Thyroid gland (tissue), 4 donors: ENCODE measurements at regions of chr17 and their contacts with region 1.

Region 1: DNA sequence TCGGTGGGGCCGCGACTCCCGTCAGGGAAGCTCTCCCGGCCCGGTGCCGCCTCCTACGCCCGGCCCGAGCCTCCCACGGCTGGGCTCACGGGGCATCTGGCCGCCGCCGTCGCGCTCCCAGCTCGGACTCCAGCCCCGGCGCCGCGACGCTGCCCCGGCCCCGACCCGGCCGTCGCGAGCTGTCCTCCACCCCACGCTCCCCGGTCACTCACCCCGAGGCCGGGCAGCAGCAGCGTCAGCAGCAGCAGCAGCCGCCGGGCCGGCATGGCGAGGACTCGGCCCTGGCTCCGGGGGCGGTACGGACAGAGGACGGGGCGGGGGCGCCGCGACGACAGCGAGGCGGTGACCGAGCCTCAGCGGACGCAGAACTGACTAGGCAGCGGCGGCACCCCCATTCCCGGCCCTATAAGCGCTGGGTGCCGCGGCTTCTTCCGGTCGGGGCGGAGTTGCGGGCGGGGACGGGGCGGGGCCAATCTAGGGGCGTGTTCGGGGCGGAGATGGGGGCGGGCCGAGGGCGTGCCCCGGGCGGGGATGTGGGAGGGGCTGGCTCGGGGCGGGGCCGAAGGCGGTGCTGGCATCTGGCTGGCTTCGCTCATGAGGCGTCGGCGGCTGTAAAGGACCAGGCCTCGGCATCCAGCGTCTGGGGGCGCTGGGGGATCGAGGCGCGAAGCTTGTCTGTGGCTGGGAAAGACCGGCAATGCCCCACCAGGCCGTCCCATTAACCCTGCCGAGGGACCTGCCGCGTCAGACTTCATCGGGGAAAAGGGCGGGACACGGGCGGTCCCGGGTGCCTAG is at the start of gene ERN1:
- DNase-seq: peak; percentile 93
- H3K4me3 ChIP-seq: peak within 1 kb of the TSS; percentile 63 to 93 (median 77)
- H3K27ac ChIP-seq: peak within 1 kb of the TSS; percentile 88 to 98 (median 90)
- H3K4me1 ChIP-seq: peaks cover 8 to 23% of the 10 kb centered on the region in 2 donors
- H3K27me3 ChIP-seq: no peaks in the 10 kb centered on the region
- CTCF ChIP-seq: no peak
- POLR2A ChIP-seq: peak; percentile 85 to 99
- total RNA-seq, gene ERN1: 9.5 to 20.2 (median 12.8) TPM

Region 2: DNA sequence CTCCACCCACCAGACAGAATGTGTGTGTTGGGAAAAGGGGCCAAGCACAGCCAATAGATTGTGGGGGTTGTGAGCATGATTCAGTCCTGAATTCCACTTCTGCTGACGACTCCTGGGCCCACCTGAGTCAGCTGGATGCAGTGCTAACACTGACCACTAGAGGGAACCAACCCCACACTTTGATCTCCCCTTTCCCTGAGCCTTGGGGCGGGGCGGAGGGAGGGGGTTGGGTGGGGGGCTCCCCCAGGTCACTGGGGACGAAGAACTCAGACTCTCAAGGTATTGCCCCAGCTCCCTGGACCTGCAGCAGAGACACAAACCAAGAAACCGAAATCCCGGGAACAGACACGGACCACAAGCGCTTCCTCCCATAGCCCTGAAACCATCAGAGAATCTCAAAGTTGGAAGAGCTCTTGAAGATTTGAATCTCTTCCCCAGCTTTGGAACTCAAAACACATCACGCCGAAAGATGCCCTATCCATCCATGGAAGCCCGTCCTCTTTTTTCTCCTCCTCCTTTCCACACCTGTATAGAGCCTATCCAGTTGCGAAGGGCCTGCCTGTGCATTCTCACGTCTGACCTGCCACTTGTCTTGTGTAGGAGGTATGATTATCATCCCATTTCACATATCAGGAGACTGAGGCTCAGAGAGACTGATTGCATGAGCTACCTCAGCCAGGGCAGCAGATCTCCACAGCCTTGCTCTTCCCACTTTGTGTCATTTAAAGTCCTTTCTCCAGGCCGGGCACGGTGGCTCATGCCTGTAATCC is 218.1 kb before region 1 on chr17:
- intact Hi-C with region 1: loop called (anchors 5 kb)
- DNase-seq: peak; percentile 38 to 43
- H3K4me3 ChIP-seq: no peak overlapping the region
- H3K27ac ChIP-seq: no peak overlapping the region
- H3K4me1 ChIP-seq: no peaks in the 10 kb centered on the region
- H3K27me3 ChIP-seq: no peaks in the 10 kb centered on the region
- CTCF ChIP-seq: peak; percentile 51 to 91 (median 61)
- POLR2A ChIP-seq: no peak

Region 3: GRCh38 chr17:64025732-64026294 is 104.1 kb before region 1 on chr17:
- intact Hi-C with region 1: loop called (anchors 10 kb)
- DNase-seq: peak; percentile 75 to 79
- H3K4me3 ChIP-seq: no peak overlapping the region
- H3K27ac ChIP-seq: peak overlapping the region in 1 of 3 donors; percentile 1
- H3K4me1 ChIP-seq: peaks cover 0 to 10% of the 10 kb centered on the region in 2 donors
- H3K27me3 ChIP-seq: no peaks in the 10 kb centered on the region
- CTCF ChIP-seq: peak; percentile 86 to 94 (median 92)
- POLR2A ChIP-seq: no peak

Region 4: GRCh38 chr17:64063766-64064224 is 66.2 kb before region 1 on chr17:
- intact Hi-C with region 1: loop called (anchors 2 kb)
- DNase-seq: peak; percentile 90 to 91
- H3K4me3 ChIP-seq: no peak overlapping the region
- H3K27ac ChIP-seq: peak overlapping the region; percentile 59 to 67 (median 67)
- H3K4me1 ChIP-seq: peaks cover 9 to 14% of the 10 kb centered on the region in 2 donors
- H3K27me3 ChIP-seq: no peaks in the 10 kb centered on the region
- CTCF ChIP-seq: peak; percentile 54 to 91 (median 81)
- POLR2A ChIP-seq: peak in 1 of 2 donors; percentile 40